Spleen (tissue), 13 donors: ENCODE measurements at regions of chr6 and their contacts with region 1.

Region 1: GRCh38 chr6:149717588-149718458 is at the start of gene LATS1:
- DNase-seq: peak; percentile 98
- H3K4me3 ChIP-seq: peak within 1 kb of the TSS; percentile 79 to 98 (median 88)
- H3K27ac ChIP-seq: peak within 1 kb of the TSS; percentile 97 to 99 (median 98)
- H3K4me1 ChIP-seq: peaks cover 14 to 56% (median 45%) of the 10 kb centered on the region in 6 donors
- H3K27me3 ChIP-seq: no peaks in the 10 kb centered on the region
- CTCF ChIP-seq: no peak
- POLR2A ChIP-seq: peak; percentile 27 to 60 (median 50)
- total RNA-seq, gene LATS1: 29.3 to 40.9 (median 33.8) TPM

Region 2: GRCh38 chr6:149534742-149535141 is 183.1 kb before region 1 on chr6:
- intact Hi-C with region 1: no loop called
- DNase-seq: no peak
- H3K4me3 ChIP-seq: no peak overlapping the region
- H3K27ac ChIP-seq: no peak overlapping the region
- H3K4me1 ChIP-seq: peaks cover 0 to 4% (median 0%) of the 10 kb centered on the region in 6 donors
- H3K27me3 ChIP-seq: no peaks in the 10 kb centered on the region
- CTCF ChIP-seq: no peak
- POLR2A ChIP-seq: no peak

Region 3: GRCh38 chr6:149565527-149566409 is 152.1 kb before region 1 on chr6 and contains the start of gene GINM1:
- intact Hi-C with region 1: loop called (anchors 10 kb)
- DNase-seq: peak; percentile 98
- H3K4me3 ChIP-seq: peak within 1 kb of the TSS; percentile 78 to 97 (median 89)
- H3K27ac ChIP-seq: peak within 1 kb of the TSS; percentile 89 to 96 (median 94)
- H3K4me1 ChIP-seq: peaks cover 15 to 44% (median 30%) of the 10 kb centered on the region in 6 donors
- H3K27me3 ChIP-seq: no peaks in the 10 kb centered on the region
- CTCF ChIP-seq: peak; percentile 42 to 77 (median 63)
- POLR2A ChIP-seq: no peak
- total RNA-seq, gene GINM1: 28.4 to 47.7 (median 37.6) TPM

Region 4: GRCh38 chr6:149648148-149649145 is 69.4 kb before region 1 on chr6 and contains the start of gene KATNA1:
- intact Hi-C with region 1: loop called (anchors 10 kb)
- DNase-seq: peak; percentile 96
- H3K4me3 ChIP-seq: peak within 1 kb of the TSS; percentile 77 to 95 (median 86)
- H3K27ac ChIP-seq: peak within 1 kb of the TSS; percentile 76 to 92 (median 85)
- H3K4me1 ChIP-seq: peaks cover 6 to 46% (median 30%) of the 10 kb centered on the region in 6 donors
- H3K27me3 ChIP-seq: no peaks in the 10 kb centered on the region
- CTCF ChIP-seq: peak in 4 of 11 experiments; percentile 7 to 28 (median 15)
- POLR2A ChIP-seq: peak in 2 of 3 donors; percentile 37 to 53
- total RNA-seq, gene KATNA1: 13.6 to 28.5 (median 17.1) TPM